ENCODE measurements at regions of chr17 and their contacts with region 1.

Region 1: DNA sequence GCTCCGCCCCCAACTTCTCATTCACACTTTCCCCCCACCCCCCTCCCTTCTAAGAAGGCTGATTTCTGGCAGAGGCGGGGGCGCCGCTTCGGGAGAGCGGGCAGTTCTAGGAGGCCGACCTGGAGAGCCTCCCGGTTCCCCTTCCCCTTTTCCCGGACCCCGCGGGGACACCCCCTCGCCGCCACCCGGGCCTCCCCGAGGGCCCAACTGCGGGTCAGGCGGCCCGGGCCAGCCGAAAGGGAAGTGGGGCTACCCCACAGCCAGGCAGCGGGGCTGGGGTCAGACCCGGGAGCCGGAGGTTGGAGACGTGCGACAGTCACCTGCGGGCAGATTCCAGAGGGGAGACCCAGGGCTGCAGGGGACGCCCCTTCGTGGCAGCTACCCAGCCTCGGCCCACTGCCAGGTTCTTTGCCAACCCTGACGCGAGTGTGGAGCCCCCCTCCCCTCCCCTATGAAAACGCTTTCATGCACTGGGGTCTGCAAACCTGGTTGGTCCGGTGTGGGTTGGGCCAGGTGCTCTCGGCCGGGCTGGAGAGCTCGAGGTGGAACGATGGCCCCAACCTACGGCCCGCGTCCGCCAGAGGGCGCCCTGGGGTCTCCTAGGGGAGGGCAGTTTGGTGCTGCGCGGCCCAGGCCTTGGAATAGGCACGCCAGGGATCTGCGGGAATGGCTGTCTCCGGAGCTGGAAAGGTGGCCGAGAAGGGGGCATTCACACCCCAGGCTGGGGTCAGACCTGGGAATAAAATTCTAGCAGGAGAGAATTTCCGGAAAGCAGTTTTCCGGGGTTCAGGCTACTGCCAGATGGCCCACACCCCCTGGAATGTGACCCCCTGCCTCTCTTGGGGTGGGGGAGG is 721 bp upstream of the SOCS3 start:
- DNase-seq: peak; percentile 75 to 82 (median 76)
- H3K4me3 ChIP-seq: peak overlapping the region; percentile 34 to 83 (median 41)
- H3K4me3 Mint-ChIP-seq: peak overlapping the region; percentile 85 to 87
- H3K27ac ChIP-seq: peak overlapping the region; percentile 14 to 82
- H3K27ac Mint-ChIP-seq: peak overlapping the region; percentile 85 to 96 (median 90)
- H3K4me1 ChIP-seq: peaks cover 41 to 55% of the 10 kb centered on the region in 2 donors
- H3K4me1 Mint-ChIP-seq: peaks cover 49% of the 10 kb centered on the region
- H3K27me3 ChIP-seq: peaks cover 8 to 42% of the 10 kb centered on the region in 2 donors
- H3K27me3 Mint-ChIP-seq: peaks cover 34 to 62% (median 54%) of the 10 kb centered on the region in 3 donors
- CTCF ChIP-seq: peak; percentile 95

Region 2: GRCh38 chr17:78289802-78290363 is 70.7 kb before region 1 on chr17:
- intact Hi-C with region 1: loop called in 1 of 2 experiments (anchors 5 kb)
- DNase-seq: peak; percentile 77 to 89 (median 80)
- H3K4me3 ChIP-seq: no peak overlapping the region
- H3K4me3 Mint-ChIP-seq: no peak overlapping the region
- H3K27ac ChIP-seq: no peak overlapping the region
- H3K27ac Mint-ChIP-seq: no peak overlapping the region
- H3K4me1 ChIP-seq: peaks cover 48 to 62% of the 10 kb centered on the region in 2 donors
- H3K4me1 Mint-ChIP-seq: peaks cover 31% of the 10 kb centered on the region
- H3K27me3 ChIP-seq: no peaks in the 10 kb centered on the region
- H3K27me3 Mint-ChIP-seq: peaks cover 0 to 2% (median 0%) of the 10 kb centered on the region in 3 donors
- CTCF ChIP-seq: peak; percentile 74

Region 3: GRCh38 chr17:78324391-78325075 is 36.1 kb before region 1 on chr17:
- intact Hi-C with region 1: loop called in 1 of 2 experiments (anchors 5 kb)
- DNase-seq: peak; percentile 72 to 84 (median 72)
- H3K4me3 ChIP-seq: peak overlapping the region in 1 of 3 experiments; percentile 46
- H3K4me3 Mint-ChIP-seq: peak overlapping the region; percentile 72 to 91
- H3K27ac ChIP-seq: peak overlapping the region; percentile 72 to 73
- H3K27ac Mint-ChIP-seq: peak overlapping the region; percentile 87 to 99 (median 96)
- H3K4me1 ChIP-seq: peaks cover 43 to 53% of the 10 kb centered on the region in 2 donors
- H3K4me1 Mint-ChIP-seq: peaks cover 39% of the 10 kb centered on the region
- H3K27me3 ChIP-seq: no peaks in the 10 kb centered on the region
- H3K27me3 Mint-ChIP-seq: peaks cover 0 to 22% (median 2%) of the 10 kb centered on the region in 3 donors
- CTCF ChIP-seq: no peak

Region 4: DNA sequence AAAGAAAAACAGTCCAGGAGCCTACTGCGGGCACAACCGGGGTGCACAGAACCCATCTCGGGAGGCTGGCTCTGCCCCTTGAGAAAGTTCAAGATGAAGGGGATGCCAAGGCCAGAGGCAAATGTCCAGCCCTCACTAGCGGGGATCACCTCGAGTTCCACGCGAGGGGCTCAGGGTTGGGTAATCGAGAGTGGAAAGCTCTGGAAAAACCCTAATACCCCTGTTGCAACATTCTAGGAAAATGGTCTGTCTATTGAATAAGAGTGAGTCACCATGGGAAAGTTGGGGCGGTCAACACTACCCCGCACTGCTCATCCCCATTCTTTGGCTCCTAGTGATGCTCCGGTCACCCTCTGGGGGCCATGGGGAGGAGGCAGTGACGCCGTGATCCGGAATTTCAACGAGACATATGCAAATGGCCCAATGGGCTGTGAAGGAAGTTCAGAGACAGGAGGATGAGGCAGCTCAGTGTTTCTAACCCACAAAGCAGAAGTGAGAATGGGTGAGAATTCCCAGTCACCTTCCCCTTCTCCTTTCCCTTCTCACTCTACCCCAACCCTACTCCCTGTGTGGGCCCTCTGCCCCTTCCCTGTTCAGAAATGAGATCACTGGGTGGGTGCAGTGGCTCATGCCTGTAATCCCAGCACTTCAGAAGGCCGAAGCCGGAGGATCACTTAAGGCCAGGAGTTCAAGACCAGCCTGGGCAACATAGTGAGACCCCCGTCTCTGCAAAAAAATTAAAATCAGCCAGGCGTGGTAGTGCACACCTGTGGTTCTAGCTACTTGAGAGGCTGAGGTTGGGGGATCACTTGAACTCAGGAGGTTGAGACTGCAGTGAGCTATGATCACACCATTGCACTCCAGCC is 23.1 kb before region 1 on chr17:
- intact Hi-C with region 1: loop called in 1 of 2 experiments (anchors 2 kb)
- DNase-seq: peak; percentile 94 to 100 (median 96)
- H3K4me3 ChIP-seq: peak overlapping the region in 1 of 3 experiments; percentile 35
- H3K4me3 Mint-ChIP-seq: peak overlapping the region; percentile 61 to 70
- H3K27ac ChIP-seq: peak overlapping the region; percentile 82 to 84
- H3K27ac Mint-ChIP-seq: peak overlapping the region; percentile 91 to 98 (median 95)
- H3K4me1 ChIP-seq: peaks cover 66 to 72% of the 10 kb centered on the region in 2 donors
- H3K4me1 Mint-ChIP-seq: peaks cover 59% of the 10 kb centered on the region
- H3K27me3 ChIP-seq: peaks cover 0 to 4% of the 10 kb centered on the region in 2 donors
- H3K27me3 Mint-ChIP-seq: peaks cover 0 to 7% (median 6%) of the 10 kb centered on the region in 3 donors
- CTCF ChIP-seq: no peak

Region 5: GRCh38 chr17:78375401-78376151 is 15.0 kb after region 1 on chr17:
- intact Hi-C with region 1: loop called (anchors 2 kb)
- DNase-seq: peak; percentile 78 to 91 (median 88)
- H3K4me3 ChIP-seq: peak overlapping the region in 1 of 3 experiments; percentile 45
- H3K4me3 Mint-ChIP-seq: peak overlapping the region; percentile 30 to 54
- H3K27ac ChIP-seq: peak overlapping the region; percentile 77 to 88
- H3K27ac Mint-ChIP-seq: peak overlapping the region; percentile 80 to 97 (median 92)
- H3K4me1 ChIP-seq: peaks cover 58 to 61% of the 10 kb centered on the region in 2 donors
- H3K4me1 Mint-ChIP-seq: peaks cover 55% of the 10 kb centered on the region
- H3K27me3 ChIP-seq: no peaks in the 10 kb centered on the region
- H3K27me3 Mint-ChIP-seq: peaks cover 0 to 1% (median under 1%) of the 10 kb centered on the region in 3 donors
- CTCF ChIP-seq: no peak

Region 6: DNA sequence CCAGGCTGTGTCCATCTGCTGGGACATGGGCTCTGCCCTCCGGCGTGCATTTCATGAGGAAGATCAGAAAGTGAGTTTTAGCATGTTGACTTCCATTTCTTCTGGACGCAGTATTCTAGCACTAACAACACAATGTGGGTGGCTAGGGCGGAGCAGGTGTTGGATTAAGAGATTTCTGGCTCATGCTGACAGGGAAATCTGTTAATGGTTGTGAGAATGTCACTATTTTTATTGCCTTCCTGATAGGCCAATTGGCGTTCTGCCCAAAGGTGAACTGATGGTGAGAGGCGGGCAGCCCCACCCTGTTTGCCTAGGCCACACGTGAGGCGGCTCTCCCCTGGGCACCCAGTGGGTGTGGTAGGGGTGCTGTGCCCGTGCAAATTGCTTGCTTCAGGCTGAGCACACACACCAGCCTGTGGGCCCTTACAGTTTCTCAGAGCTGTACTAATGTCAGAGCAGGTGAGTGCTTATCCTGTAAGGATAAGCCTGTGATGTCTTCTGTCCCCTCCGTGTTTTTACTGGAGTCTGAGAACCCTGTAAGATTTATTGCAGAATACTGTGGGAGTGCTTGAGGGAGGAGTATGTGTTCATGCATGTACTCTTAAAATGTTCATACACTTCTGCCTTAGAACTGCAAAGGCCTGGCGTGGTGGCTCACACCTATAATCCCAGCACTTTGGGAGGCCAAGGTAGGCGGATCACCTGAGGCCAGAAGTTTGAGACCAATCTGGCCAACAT is 48.8 kb after region 1 on chr17:
- intact Hi-C with region 1: loop called in 1 of 2 experiments (anchors 5 kb)
- DNase-seq: no peak
- H3K4me3 ChIP-seq: no peak overlapping the region
- H3K4me3 Mint-ChIP-seq: no peak overlapping the region
- H3K27ac ChIP-seq: peak overlapping the region in 1 of 2 donors; percentile 38
- H3K27ac Mint-ChIP-seq: peak overlapping the region in 5 of 7 donors; percentile 63 to 90 (median 76)
- H3K4me1 ChIP-seq: peaks cover 30 to 35% of the 10 kb centered on the region in 2 donors
- H3K4me1 Mint-ChIP-seq: peaks cover 51% of the 10 kb centered on the region
- H3K27me3 ChIP-seq: no peaks in the 10 kb centered on the region
- H3K27me3 Mint-ChIP-seq: no peaks in the 10 kb centered on the region
- CTCF ChIP-seq: no peak

Region 7: GRCh38 chr17:78421484-78422266 is 61.1 kb after region 1 on chr17:
- intact Hi-C with region 1: loop called (anchors 1 to 5 kb)
- DNase-seq: peak; percentile 77 to 80 (median 78)
- H3K4me3 ChIP-seq: no peak overlapping the region
- H3K4me3 Mint-ChIP-seq: no peak overlapping the region
- H3K27ac ChIP-seq: peak overlapping the region in 1 of 2 donors; percentile 13
- H3K27ac Mint-ChIP-seq: peak overlapping the region; percentile 57 to 99 (median 76)
- H3K4me1 ChIP-seq: peaks cover 16 to 26% of the 10 kb centered on the region in 2 donors
- H3K4me1 Mint-ChIP-seq: peaks cover 30% of the 10 kb centered on the region
- H3K27me3 ChIP-seq: no peaks in the 10 kb centered on the region
- H3K27me3 Mint-ChIP-seq: peaks cover 0 to 2% (median 0%) of the 10 kb centered on the region in 3 donors
- CTCF ChIP-seq: peak; percentile 97

Region 8: DNA sequence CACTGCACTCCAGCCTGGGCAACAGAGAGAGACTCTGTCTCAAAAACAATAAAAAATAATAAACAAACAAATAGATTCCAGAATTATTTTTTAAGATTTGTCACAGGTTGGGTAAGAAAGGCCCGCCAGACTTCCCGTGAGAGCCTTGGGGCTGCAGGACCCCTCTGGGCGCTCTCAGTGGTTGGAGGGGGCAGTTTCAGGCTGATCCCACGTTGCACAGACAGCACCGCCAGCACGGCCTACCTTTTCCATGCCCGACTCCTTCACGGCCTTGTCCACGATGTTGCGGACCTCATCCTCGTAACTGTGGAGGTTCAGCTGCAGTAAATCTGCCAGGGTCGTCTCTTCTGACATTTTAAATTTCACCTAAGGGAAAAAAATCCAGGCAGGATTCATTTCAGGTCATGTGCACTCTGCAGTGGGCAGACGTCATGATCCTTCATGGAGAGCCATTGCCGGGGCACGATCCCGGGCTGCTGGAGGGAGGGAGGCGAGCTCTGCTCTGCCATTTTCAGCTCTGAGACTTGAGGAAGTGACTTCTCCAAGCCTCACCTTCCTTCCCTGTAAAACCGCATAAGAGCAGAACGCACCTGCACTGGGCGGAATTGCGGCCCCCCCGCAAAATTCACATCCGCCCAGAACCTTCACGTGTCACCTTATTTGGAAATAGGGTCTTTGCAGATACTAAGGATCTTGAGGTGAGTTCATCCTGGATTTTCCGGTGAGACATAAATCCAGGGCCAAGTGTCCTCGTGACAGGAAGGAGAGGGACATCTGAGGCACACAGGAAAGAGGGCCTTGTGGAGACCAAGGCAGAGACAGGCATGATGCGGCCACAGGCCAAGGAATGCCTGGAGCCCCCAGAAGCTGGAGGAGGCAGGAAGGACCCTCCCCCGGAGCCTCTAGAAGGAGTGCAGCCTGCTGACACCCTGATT is 149.8 kb after region 1 on chr17:
- intact Hi-C with region 1: no loop called
- DNase-seq: no peak
- H3K4me3 ChIP-seq: no peak overlapping the region
- H3K4me3 Mint-ChIP-seq: no peak overlapping the region
- H3K27ac ChIP-seq: no peak overlapping the region
- H3K27ac Mint-ChIP-seq: no peak overlapping the region
- H3K4me1 ChIP-seq: no peaks in the 10 kb centered on the region
- H3K4me1 Mint-ChIP-seq: no peaks in the 10 kb centered on the region
- H3K27me3 ChIP-seq: no peaks in the 10 kb centered on the region
- H3K27me3 Mint-ChIP-seq: peaks cover 0 to 7% (median 3%) of the 10 kb centered on the region in 3 donors
- CTCF ChIP-seq: no peak

Measured in CD14-positive monocyte (primary cell).